Calu3 (cell line): ENCODE measurements at regions of chr2 and their contacts with region 1.

Region 1: GRCh38 chr2:183248866-183249567 is 124.8 kb downstream of the NUP35 start:
- DNase-seq: no peak
- H3K4me3 Mint-ChIP-seq: no peak overlapping the region
- H3K27ac Mint-ChIP-seq: no peak overlapping the region
- H3K4me1 Mint-ChIP-seq: no peaks in the 10 kb centered on the region
- H3K27me3 Mint-ChIP-seq: no peaks in the 10 kb centered on the region
- CTCF ChIP-seq: peak; percentile 37

Region 2: DNA sequence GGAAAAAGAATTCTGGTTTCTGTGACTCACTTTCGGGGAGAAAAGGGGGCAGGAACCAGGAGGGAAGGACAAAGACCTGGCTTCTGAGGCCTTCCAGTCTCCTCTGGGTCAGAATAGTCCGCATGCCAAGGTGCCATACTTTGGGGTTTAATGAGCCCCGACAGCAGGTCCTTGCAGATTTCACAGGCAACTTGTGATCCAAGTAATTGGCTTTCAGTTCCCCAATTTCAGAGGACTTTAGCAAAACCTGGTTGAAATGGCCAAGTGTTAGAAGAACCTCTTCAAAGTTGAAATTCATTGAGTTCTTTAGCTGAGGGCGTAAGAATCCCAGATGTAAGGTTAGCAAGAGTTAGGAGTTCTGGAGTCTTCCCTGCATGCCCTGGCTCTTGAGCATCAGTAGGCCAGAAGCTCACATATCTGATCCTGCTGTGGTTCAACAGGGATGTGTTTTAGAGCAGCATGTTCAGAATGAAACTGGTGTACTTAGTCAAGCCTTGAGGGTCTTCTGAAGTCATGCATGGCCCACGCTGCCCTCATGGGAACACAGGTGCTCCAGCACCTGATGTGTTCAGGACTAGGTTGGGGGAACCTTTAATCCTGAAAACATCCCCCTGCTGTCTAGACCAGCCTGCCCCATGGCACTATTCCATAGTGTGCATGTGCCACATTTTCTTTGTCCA is 18.3 kb after region 1 on chr2:
- CTCF ChIA-PET with region 1: no interaction called
- intact Hi-C with region 1: no loop called
- DNase-seq: no peak
- H3K4me3 Mint-ChIP-seq: no peak overlapping the region
- H3K27ac Mint-ChIP-seq: no peak overlapping the region
- H3K4me1 Mint-ChIP-seq: no peaks in the 10 kb centered on the region
- H3K27me3 Mint-ChIP-seq: no peaks in the 10 kb centered on the region
- CTCF ChIP-seq: no peak

Region 3: GRCh38 chr2:183359867-183360266 is 110.8 kb after region 1 on chr2:
- CTCF ChIA-PET with region 1: interaction called, 3 read pairs
- intact Hi-C with region 1: loop called (anchors 5 kb)
- DNase-seq: no peak
- H3K4me3 Mint-ChIP-seq: no peak overlapping the region
- H3K27ac Mint-ChIP-seq: no peak overlapping the region
- H3K4me1 Mint-ChIP-seq: no peaks in the 10 kb centered on the region
- H3K27me3 Mint-ChIP-seq: no peaks in the 10 kb centered on the region
- CTCF ChIP-seq: no peak

Region 4: GRCh38 chr2:184363213-184363612 is 1114.2 kb after region 1 on chr2:
- CTCF ChIA-PET with region 1: no interaction called
- intact Hi-C with region 1: loop called (anchors 10 kb)
- DNase-seq: no peak
- H3K4me3 Mint-ChIP-seq: no peak overlapping the region
- H3K27ac Mint-ChIP-seq: no peak overlapping the region
- H3K4me1 Mint-ChIP-seq: no peaks in the 10 kb centered on the region
- H3K27me3 Mint-ChIP-seq: no peaks in the 10 kb centered on the region
- CTCF ChIP-seq: no peak